Activated CD8-positive, alpha-beta T cell treated with anti-CD3 and anti-CD28 coated beads for 36 hours (primary cell): ENCODE measurements at regions of chr16 and their contacts with region 1.

Region 1: DNA sequence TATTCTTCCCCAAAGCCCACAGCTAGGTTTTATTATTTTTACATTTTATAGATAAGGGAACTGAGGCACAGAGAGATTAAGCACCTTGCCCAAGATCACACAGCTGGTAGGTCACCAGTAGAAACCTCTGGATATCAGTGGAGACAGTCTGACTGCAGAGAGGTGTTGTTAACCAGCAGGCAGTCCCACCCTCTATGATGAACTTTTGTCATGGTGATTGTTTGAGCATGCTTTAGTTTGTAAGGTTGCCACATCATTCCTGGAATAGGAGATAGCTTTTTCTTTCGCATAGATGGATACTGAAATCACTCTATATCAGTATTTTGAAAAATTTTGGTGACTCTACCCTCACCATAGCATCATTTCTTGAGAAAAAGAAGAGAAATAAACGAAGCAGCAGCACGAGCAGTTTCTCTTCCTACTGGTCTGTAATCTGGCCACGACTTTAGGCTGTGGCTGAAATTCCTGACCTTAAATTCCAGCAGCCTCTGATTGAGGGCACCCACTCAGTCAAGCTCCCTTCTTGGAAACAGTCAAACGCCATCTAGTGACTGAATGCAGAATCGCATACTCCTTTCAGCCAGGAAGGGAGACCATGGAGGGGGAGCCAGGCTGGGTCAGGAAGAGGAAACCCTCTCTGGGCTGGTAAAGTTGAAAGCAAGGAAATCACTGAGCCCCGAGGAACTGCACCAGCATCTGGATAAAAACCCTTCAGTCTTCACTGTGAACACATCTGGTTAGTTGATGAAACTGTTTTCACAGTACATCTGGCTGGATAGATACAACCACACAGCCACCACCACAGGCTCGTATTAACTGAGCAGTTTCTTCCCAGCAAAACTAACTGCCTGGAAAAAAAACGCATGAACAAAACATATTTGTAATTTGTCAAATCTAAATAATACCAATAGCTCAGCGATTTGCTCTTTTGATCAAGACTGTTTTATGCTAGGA is 108.4 kb upstream of the XYLT1 start:
- DNase-seq: peak; percentile 71
- ATAC-seq: peak; percentile 83
- H3K4me3 Mint-ChIP-seq: no peak overlapping the region
- H3K27ac Mint-ChIP-seq: no peak overlapping the region
- H3K4me1 Mint-ChIP-seq: no peaks in the 10 kb centered on the region
- H3K27me3 Mint-ChIP-seq: peaks cover 2% of the 10 kb centered on the region
- CTCF ChIP-seq: peak; percentile 84

Region 2: DNA sequence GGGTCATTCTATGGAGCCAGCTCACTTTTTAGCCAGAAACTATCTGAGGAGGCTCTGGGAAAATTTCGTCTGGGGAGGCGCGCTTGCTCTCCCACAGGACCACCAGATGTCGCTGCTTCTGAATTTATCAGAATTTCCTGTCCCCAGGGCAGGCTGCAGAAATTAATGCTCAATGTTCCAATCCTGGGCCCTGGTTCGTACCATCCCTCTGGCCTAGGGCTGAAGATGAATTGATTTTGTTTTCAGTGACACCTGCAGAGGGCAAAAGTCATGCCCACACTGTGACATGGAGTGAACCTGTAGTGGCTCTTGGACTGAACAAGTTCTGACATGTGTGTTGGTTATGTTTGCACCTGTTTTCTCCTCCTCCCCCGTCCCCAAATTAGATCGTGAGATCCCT is 717.7 kb before region 1 on chr16:
- CTCF ChIA-PET with region 1: interaction called, 16 read pairs
- POLR2A ChIA-PET with region 1: no interaction called
- intact Hi-C with region 1: no loop called
- DNase-seq: peak; percentile 66
- ATAC-seq: peak; percentile 49
- H3K4me3 Mint-ChIP-seq: no peak overlapping the region
- H3K27ac Mint-ChIP-seq: no peak overlapping the region
- H3K4me1 Mint-ChIP-seq: no peaks in the 10 kb centered on the region
- H3K27me3 Mint-ChIP-seq: peaks cover 11% of the 10 kb centered on the region
- CTCF ChIP-seq: peak; percentile 79

Region 3: DNA sequence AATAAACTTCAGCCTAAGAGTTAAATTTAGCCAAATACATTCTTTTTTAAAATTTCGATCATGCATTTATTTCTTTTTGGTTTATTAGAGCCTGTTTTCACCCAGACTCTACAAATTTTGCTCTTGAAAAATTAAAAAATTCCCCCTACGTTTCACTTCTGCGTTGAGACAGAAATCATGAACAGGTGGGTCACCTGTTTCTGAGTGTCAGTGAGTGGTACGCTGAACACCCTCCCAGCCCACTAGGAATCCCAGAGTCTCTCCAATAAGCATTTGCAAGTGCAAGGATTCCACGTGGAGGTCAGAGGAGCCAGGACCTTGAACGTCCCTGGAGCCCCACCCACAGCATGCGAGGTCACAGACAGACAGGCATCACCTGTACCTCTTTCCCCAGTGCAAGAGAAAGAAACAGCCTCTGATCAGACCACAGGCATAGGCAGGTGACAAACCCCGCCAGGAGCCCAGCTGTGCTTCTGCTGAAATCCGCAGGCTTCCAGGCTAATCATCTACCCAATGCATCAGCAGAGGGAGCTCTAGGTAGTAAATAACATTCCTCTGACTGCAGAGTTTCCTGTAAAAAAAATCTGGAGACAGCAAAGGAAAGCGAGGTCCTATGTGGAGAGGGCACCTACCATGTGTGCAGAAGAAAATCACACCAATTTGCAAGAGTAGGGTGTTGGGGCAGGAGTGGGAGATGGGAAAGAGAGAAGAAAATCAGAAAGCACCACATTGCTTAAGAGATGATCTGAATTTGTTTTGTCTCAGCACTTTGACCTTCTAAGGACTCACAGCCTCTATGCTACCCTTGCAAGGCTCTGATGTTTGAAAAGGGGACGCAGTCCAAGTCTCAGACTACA is 102.6 kb before region 1 on chr16:
- CTCF ChIA-PET with region 1: interaction called, 21 read pairs
- POLR2A ChIA-PET with region 1: no interaction called
- intact Hi-C with region 1: no loop called
- DNase-seq: peak; percentile 42
- ATAC-seq: peak; percentile 72
- H3K4me3 Mint-ChIP-seq: no peak overlapping the region
- H3K27ac Mint-ChIP-seq: no peak overlapping the region
- H3K4me1 Mint-ChIP-seq: peaks cover 27% of the 10 kb centered on the region
- H3K27me3 Mint-ChIP-seq: no peaks in the 10 kb centered on the region
- CTCF ChIP-seq: peak; percentile 49

Region 4: DNA sequence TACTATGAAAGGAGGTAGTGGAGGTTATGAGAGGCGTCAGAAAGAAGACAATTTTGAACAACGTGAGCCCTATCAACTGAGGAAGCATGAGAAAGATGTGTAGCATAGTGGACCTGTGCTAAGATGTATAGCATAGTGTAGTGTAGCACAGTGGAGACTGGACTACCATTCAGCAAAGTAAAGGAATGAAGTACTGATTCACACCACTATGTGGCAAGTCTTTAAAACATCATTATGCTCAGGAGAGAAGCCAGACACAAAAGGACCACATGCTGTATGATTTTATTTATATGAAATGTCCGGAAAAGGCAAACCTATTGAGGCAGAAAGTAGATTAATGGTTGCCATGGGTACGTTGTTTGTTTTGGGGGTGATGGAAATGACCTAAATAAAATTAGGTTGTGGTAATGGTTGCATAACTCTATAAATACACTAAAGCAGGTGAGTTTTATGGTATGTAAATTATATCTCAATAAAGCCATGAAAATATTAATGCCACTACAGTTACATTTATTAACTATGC is 88.0 kb before region 1 on chr16:
- CTCF ChIA-PET with region 1: no interaction called
- POLR2A ChIA-PET with region 1: no interaction called
- intact Hi-C with region 1: no loop called
- DNase-seq: no peak
- ATAC-seq: no peak
- H3K4me3 Mint-ChIP-seq: no peak overlapping the region
- H3K27ac Mint-ChIP-seq: no peak overlapping the region
- H3K4me1 Mint-ChIP-seq: no peaks in the 10 kb centered on the region
- H3K27me3 Mint-ChIP-seq: peaks cover 2% of the 10 kb centered on the region
- CTCF ChIP-seq: no peak

Region 5: GRCh38 chr16:17556276-17557052 is 22.7 kb before region 1 on chr16:
- CTCF ChIA-PET with region 1: interaction called, 28 read pairs
- POLR2A ChIA-PET with region 1: no interaction called
- intact Hi-C with region 1: no loop called
- DNase-seq: peak; percentile 6
- ATAC-seq: no peak
- H3K4me3 Mint-ChIP-seq: no peak overlapping the region
- H3K27ac Mint-ChIP-seq: no peak overlapping the region
- H3K4me1 Mint-ChIP-seq: no peaks in the 10 kb centered on the region
- H3K27me3 Mint-ChIP-seq: peaks cover 1% of the 10 kb centered on the region
- CTCF ChIP-seq: peak; percentile 64

Region 6: DNA sequence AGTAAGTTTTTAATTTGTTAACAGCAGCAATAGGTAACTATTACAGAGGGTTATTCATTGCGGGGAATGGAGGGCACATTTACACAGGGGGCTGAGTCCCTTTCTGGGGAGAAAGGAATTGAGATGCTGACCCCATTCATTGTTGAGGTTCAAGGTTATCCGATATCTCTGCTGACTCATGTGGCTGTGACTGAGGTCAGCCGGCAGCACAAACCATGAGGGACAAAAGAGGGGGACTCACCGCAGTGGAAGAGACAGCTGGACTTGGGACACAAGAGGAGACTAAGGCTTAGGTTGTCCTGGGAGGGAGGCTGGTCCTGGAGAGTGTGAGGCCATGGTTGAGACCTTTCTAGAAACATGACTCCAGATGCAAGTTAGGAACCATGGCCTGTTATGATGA is 10.7 kb after region 1 on chr16:
- CTCF ChIA-PET with region 1: interaction called, 25 read pairs
- POLR2A ChIA-PET with region 1: no interaction called
- intact Hi-C with region 1: no loop called
- DNase-seq: no peak
- ATAC-seq: no peak
- H3K4me3 Mint-ChIP-seq: no peak overlapping the region
- H3K27ac Mint-ChIP-seq: peak overlapping the region; percentile 43
- H3K4me1 Mint-ChIP-seq: peaks cover 4% of the 10 kb centered on the region
- H3K27me3 Mint-ChIP-seq: peaks cover 15% of the 10 kb centered on the region
- CTCF ChIP-seq: no peak